ENCODE measurements at regions of chr5 and their contacts with region 1.

Region 1: DNA sequence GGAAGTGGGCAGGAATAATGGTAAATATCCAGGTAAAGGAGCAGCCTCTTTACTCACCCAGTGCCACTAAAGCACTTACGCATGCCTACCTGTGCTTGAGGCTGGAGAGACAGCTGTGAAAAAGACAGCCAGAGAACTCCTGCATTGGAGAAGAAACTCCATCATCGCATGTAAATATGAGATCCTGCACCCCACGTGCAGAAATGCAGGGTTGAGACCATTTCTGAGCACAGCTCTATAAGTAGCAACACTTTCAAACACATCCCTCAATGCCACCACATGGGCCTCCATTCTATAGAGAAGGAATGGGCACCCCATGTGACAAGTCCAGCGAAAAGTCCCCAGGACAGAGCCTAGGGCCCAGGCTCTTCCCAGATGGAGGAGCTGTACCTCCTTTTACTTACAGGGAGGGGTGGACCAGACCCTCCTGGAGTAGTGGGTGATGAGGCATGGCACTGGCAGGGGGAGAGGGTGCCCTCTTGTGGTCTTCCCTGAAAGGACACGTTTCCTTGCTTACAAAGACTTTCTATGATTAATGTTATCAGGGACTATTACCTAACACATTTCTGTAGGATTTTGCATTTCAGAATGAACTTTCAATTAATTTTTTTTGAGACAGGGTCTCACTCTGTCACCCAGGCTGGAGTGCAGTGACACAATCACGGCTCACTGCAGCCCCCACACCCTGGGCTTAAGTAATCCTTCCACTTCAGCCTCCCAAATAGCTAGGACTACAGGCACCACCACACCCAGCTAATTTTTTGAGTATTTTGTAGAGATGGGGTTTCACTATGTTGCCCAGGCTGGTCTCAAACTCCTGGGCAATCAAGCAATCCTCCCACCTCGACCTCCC is 55.3 kb upstream of the IL17B start:
- DNase-seq: peak; percentile 88
- H3K4me3 ChIP-seq: peak overlapping the region in 1 of 2 experiments; percentile 12; a peak in 1 of 4 replicates
- H3K27ac ChIP-seq: peak overlapping the region; percentile 23 to 63; a peak in 2 of 4 replicates
- H3K4me1 ChIP-seq: peaks cover 0 to 20% of the 10 kb centered on the region in 2 experiments; a peak in 1 of 4 replicates
- H3K27me3 ChIP-seq: no peaks in the 10 kb centered on the region
- CTCF ChIP-seq: peak; percentile 95
- EP300 ChIP-seq: no peak
- RAD21 ChIP-seq: peak; percentile 91

Region 2: DNA sequence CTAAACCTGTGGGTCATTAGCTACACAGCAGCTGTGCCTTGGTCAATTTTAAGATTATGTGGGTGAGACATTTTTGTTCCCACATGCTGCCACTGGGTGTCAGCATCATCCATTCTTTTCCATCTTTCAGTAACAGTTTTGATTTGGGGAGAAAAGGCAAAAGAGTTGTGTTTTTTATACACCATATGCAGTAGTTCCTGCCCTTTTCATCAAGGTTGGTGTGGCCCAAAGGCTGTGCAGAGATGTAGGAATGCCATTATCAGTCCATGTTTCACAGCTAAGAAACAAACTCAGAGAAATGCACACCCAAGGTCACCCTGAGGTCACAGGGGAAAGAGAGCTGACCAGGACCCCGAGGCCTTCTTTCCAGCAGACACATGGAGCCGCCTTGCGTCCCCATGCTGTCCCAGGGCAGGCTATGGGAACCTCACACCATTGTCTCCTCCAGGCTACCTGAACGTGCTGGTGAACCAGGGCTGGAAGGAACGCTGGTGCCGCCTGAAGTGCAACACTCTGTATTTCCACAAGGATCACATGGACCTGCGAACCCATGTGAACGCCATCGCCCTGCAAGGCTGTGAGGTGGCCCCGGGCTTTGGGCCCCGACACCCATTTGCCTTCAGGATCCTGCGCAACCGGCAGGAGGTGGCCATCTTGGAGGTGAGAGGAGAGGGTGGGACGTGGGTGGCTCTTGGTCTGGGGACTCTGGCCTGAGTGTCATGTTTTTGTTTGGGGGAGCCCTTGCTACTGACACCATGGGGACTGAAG is 116.9 kb before region 1 on chr5:
- CTCF ChIA-PET with region 1: interaction called, 69 read pairs
- POLR2A ChIA-PET with region 1: interaction called, 6 read pairs
- DNase-seq: peak; percentile 76
- H3K4me3 ChIP-seq: no peak overlapping the region
- H3K27ac ChIP-seq: peak overlapping the region in 1 of 2 experiments; percentile 63; a peak in 2 of 4 replicates
- H3K4me1 ChIP-seq: peaks cover 13 to 20% of the 10 kb centered on the region in 2 experiments
- H3K27me3 ChIP-seq: no peaks in the 10 kb centered on the region
- CTCF ChIP-seq: peak; percentile 75
- EP300 ChIP-seq: no peak
- RAD21 ChIP-seq: peak; percentile 90

Region 3: GRCh38 chr5:149400304-149400703 is 34.1 kb before region 1 on chr5:
- CTCF ChIA-PET with region 1: interaction called, 26 read pairs
- POLR2A ChIA-PET with region 1: no interaction called
- DNase-seq: no peak
- H3K4me3 ChIP-seq: no peak overlapping the region
- H3K27ac ChIP-seq: peak overlapping the region in 1 of 2 experiments; percentile 37; a peak in 1 of 4 replicates
- H3K4me1 ChIP-seq: peaks cover 13 to 20% of the 10 kb centered on the region in 2 experiments; a peak in 3 of 4 replicates
- H3K27me3 ChIP-seq: no peaks in the 10 kb centered on the region
- CTCF ChIP-seq: no peak
- EP300 ChIP-seq: no peak
- RAD21 ChIP-seq: no peak

Region 4: DNA sequence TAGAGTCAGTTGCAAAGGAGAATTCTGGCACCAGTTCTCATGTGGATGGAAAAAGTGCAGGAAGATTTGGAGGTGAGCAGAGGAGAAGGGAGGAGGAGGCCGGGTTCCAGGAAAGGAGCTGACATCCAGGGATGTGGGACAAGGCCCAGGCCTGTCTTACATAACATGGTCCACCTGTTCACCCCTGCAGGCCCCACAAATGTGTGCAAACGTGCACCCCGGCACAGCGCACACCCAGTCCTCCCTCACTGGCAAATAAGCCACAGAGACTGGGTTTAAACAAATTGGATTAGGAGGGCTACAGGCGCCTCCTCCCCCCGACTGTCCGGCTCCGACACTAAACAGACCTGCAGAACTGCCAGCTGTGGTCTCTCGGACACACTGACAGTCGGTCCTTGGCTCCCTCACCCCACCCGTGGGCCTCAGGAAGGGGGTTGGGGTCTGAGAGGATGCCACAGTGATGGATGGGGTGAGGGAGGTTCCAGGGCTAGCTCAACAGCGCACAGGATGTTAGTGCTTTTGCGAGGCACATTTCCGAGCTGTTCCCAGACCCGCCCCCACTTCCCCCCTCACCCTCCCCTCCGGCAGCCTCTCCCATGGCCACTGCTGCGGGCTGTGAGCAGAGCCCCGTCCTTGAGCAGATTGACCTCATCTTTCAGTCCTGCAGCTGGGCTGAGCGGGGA is 11.9 kb before region 1 on chr5:
- CTCF ChIA-PET with region 1: interaction called, 98 read pairs
- POLR2A ChIA-PET with region 1: interaction called, 49 read pairs
- DNase-seq: peak; percentile 89
- H3K4me3 ChIP-seq: 0 out of 4 replicates have a peak overlapping the region, but pooled peaks of 1 of the 2 experiments have one; percentile 3
- H3K27ac ChIP-seq: peak overlapping the region; percentile 82 to 100
- H3K4me1 ChIP-seq: peaks cover 21 to 79% of the 10 kb centered on the region in 2 experiments
- H3K27me3 ChIP-seq: no peaks in the 10 kb centered on the region
- CTCF ChIP-seq: no peak
- EP300 ChIP-seq: peak; percentile 82 to 99
- RAD21 ChIP-seq: peak; percentile 39

Measured in SK-N-SH (cell line).